MCF 10A (cell line): ENCODE measurements at regions of chr4 and their contacts with region 1.

Region 1: DNA sequence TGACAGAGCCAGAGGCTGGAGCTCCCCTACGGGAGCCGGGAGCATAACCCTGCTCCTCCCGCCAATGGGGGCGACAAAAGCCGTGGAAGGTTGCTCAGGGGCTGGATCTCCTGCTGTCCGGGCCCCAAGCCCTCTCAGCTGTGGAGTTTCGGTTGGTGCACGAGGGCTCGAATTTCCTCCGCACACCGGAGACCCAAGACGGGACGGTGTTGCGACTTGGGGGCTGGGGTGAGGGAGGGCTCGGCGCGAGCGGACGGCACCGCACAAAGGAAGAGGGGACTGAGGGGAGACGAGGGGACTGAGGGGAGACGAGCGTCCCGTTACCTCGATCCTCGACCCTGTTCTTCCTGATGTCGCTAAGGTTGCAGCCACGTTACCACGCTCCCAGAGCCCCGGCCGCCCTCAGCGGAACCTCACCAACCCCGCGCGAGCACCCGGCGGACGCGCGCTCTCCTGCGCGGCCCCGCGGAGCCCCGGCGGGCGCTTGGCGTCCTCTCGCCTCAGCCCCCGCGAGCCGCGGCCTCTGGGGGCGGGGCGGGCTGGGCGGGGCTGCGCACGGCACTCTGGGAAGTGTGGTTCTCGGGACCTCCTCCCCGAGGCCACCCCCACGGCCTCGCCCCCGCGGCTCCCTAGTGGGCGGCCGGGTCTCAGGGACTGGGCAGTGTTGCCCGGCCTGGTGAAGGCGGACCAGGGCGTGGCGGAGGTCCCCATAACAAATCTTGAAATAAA is at the start of gene KLHL8:
- DNase-seq: peak; percentile 91
- H3K4me3 Mint-ChIP-seq: peak within 1 kb of the TSS; percentile 91
- H3K27ac Mint-ChIP-seq: peak within 1 kb of the TSS; percentile 81
- H3K4me1 Mint-ChIP-seq: peaks cover 5% of the 10 kb centered on the region
- H3K27me3 Mint-ChIP-seq: no peaks in the 10 kb centered on the region
- CTCF ChIP-seq: peak; percentile 0
- total RNA-seq, gene KLHL8: 12.9 and 14.9 TPM in 2 replicates

Region 2: GRCh38 chr4:87150498-87151261 is 69.6 kb before region 1 on chr4:
- CTCF ChIA-PET with region 1: interaction called, 12 read pairs
- POLR2A ChIA-PET with region 1: interaction called, 7 read pairs
- intact Hi-C with region 1: no loop called
- DNase-seq: peak; percentile 85
- H3K4me3 Mint-ChIP-seq: no peak overlapping the region
- H3K27ac Mint-ChIP-seq: no peak overlapping the region
- H3K4me1 Mint-ChIP-seq: peaks cover 11% of the 10 kb centered on the region
- H3K27me3 Mint-ChIP-seq: no peaks in the 10 kb centered on the region
- CTCF ChIP-seq: peak; percentile 81

Region 3: GRCh38 chr4:87188048-87188447 is 32.2 kb before region 1 on chr4:
- CTCF ChIA-PET with region 1: interaction called, 11 read pairs
- POLR2A ChIA-PET with region 1: interaction called, 3 read pairs
- intact Hi-C with region 1: no loop called
- DNase-seq: peak; percentile 18
- H3K4me3 Mint-ChIP-seq: no peak overlapping the region
- H3K27ac Mint-ChIP-seq: no peak overlapping the region
- H3K4me1 Mint-ChIP-seq: no peaks in the 10 kb centered on the region
- H3K27me3 Mint-ChIP-seq: no peaks in the 10 kb centered on the region
- CTCF ChIP-seq: no peak

Region 4: GRCh38 chr4:87209696-87210095 is 10.6 kb before region 1 on chr4:
- CTCF ChIA-PET with region 1: no interaction called
- POLR2A ChIA-PET with region 1: interaction called, 14 read pairs
- intact Hi-C with region 1: no loop called
- DNase-seq: peak; percentile 63
- H3K4me3 Mint-ChIP-seq: no peak overlapping the region
- H3K27ac Mint-ChIP-seq: no peak overlapping the region
- H3K4me1 Mint-ChIP-seq: peaks cover 12% of the 10 kb centered on the region
- H3K27me3 Mint-ChIP-seq: no peaks in the 10 kb centered on the region
- CTCF ChIP-seq: no peak

Region 5: GRCh38 chr4:87298397-87298796 is 78.1 kb after region 1 on chr4:
- CTCF ChIA-PET with region 1: no interaction called
- POLR2A ChIA-PET with region 1: no interaction called
- intact Hi-C with region 1: no loop called
- DNase-seq: no peak
- H3K4me3 Mint-ChIP-seq: no peak overlapping the region
- H3K27ac Mint-ChIP-seq: no peak overlapping the region
- H3K4me1 Mint-ChIP-seq: no peaks in the 10 kb centered on the region
- H3K27me3 Mint-ChIP-seq: no peaks in the 10 kb centered on the region
- CTCF ChIP-seq: no peak